Mucosa of descending colon (tissue), 3 donors: ENCODE measurements at regions of chr5 and their contacts with region 1.

Region 1: GRCh38 chr5:16489322-16489791 is 23.8 kb upstream of the ZNF622 start:
- DNase-seq: peak in 1 of 3 donors; percentile 50
- ATAC-seq: peak; percentile 58
- H3K4me3 ChIP-seq: no peak overlapping the region
- H3K4me1 ChIP-seq: peaks cover 38% of the 10 kb centered on the region
- CTCF ChIP-seq: no peak

Region 2: DNA sequence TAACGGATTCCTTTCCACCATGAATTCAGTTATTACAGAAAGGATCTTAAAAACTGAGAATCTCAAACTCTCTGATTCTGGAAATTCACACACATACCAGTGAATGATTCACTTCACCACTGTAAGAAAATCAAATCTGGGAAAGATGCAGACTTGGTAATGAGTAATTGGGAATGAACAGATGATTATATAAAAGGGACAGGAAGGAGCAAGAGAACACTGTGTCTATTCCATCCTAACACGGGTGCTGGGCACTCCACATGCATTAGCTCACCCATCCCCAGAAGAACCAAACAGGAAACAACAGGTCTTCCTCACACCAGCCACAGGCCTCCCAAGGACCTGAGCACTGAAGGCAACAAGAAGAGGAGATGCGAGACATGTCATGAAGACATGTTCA is 51.1 kb after region 1 on chr5:
- intact Hi-C with region 1: loop called in 1 of 2 experiments (anchors 5 kb)
- DNase-seq: no peak
- ATAC-seq: no peak
- H3K4me3 ChIP-seq: no peak overlapping the region
- H3K4me1 ChIP-seq: peaks cover 20% of the 10 kb centered on the region
- CTCF ChIP-seq: no peak

Region 3: GRCh38 chr5:16666883-16667398 is 177.6 kb after region 1 on chr5:
- intact Hi-C with region 1: loop called in 1 of 2 experiments (anchors 10 kb)
- DNase-seq: peak in 2 of 3 donors; percentile 68 to 82
- ATAC-seq: peak; percentile 77
- H3K4me3 ChIP-seq: no peak overlapping the region
- H3K4me1 ChIP-seq: peaks cover 2% of the 10 kb centered on the region
- CTCF ChIP-seq: peak; percentile 27